Heart right ventricle (tissue), 16 donors: ENCODE measurements at regions of chr3 and their contacts with region 1.

Region 1: GRCh38 chr3:156547637-156548036 is 7.3 kb downstream of the SSR3 start:
- DNase-seq: no peak
- ATAC-seq: peak in 6 of 8 donors; percentile 57 to 78 (median 65)
- H3K4me3 ChIP-seq: no peak overlapping the region
- H3K27ac ChIP-seq: peak overlapping the region in 9 of 10 donors; percentile 38 to 91 (median 59)
- H3K4me1 ChIP-seq: peaks cover 5 to 99% (median 81%) of the 10 kb centered on the region in 9 donors
- H3K27me3 ChIP-seq: no peaks in the 10 kb centered on the region
- CTCF ChIP-seq: no peak

Region 2: GRCh38 chr3:156816800-156817645 is 269.4 kb after region 1 on chr3:
- intact Hi-C with region 1: loop called in 6 of 10 experiments (anchors 5 to 10 kb)
- DNase-seq: peak; percentile 74 to 88
- ATAC-seq: peak; percentile 90 to 96 (median 93)
- H3K4me3 ChIP-seq: peak overlapping the region; percentile 54 to 73 (median 64)
- H3K27ac ChIP-seq: peak overlapping the region; percentile 79 to 94 (median 82)
- H3K4me1 ChIP-seq: peaks cover 0 to 28% (median 17%) of the 10 kb centered on the region in 9 donors
- H3K27me3 ChIP-seq: no peaks in the 10 kb centered on the region
- CTCF ChIP-seq: peak in 3 of 9 donors; percentile 12 to 41 (median 26)